Natural killer cell (primary cell): ENCODE measurements at regions of chr6 and their contacts with region 1.

Region 1: GRCh38 chr6:166402582-166403277 is 20.0 kb upstream of the MPC1 start:
- DNase-seq: no peak
- ATAC-seq: no peak
- H3K4me3 ChIP-seq: no peak overlapping the region
- H3K4me3 Mint-ChIP-seq: no peak overlapping the region
- H3K27ac ChIP-seq: no peak overlapping the region
- H3K27ac Mint-ChIP-seq: no peak overlapping the region
- H3K4me1 ChIP-seq: peaks cover 5% of the 10 kb centered on the region
- H3K4me1 Mint-ChIP-seq: peaks cover 0 to 16% of the 10 kb centered on the region in 2 donors
- H3K27me3 ChIP-seq: no peaks in the 10 kb centered on the region
- H3K27me3 Mint-ChIP-seq: peaks cover 6 to 11% of the 10 kb centered on the region in 2 donors
- CTCF ChIP-seq: no peak

Region 2: GRCh38 chr6:166313255-166314070 is 89.3 kb before region 1 on chr6:
- intact Hi-C with region 1: loop called (anchors 1 kb)
- DNase-seq: peak; percentile 45 to 77
- ATAC-seq: peak; percentile 95 to 100 (median 97)
- H3K4me3 ChIP-seq: no peak overlapping the region
- H3K4me3 Mint-ChIP-seq: no peak overlapping the region
- H3K27ac ChIP-seq: no peak overlapping the region
- H3K27ac Mint-ChIP-seq: no peak overlapping the region
- H3K4me1 ChIP-seq: peaks cover 2% of the 10 kb centered on the region
- H3K4me1 Mint-ChIP-seq: peaks cover 1 to 6% of the 10 kb centered on the region in 2 donors
- H3K27me3 ChIP-seq: peaks cover 6% of the 10 kb centered on the region
- H3K27me3 Mint-ChIP-seq: peaks cover 17% of the 10 kb centered on the region in 2 donors
- CTCF ChIP-seq: peak; percentile 66

Region 3: GRCh38 chr6:166382933-166383801 is 19.6 kb before region 1 on chr6 and contains the start of gene MPC1:
- intact Hi-C with region 1: no loop called
- DNase-seq: peak; percentile 94 to 96
- ATAC-seq: peak; percentile 92 to 99 (median 95)
- H3K4me3 ChIP-seq: peak within 1 kb of the TSS; percentile 75
- H3K4me3 Mint-ChIP-seq: peak within 1 kb of the TSS; percentile 94
- H3K27ac ChIP-seq: peak within 1 kb of the TSS; percentile 75
- H3K27ac Mint-ChIP-seq: peak within 1 kb of the TSS; percentile 88 to 92
- H3K4me1 ChIP-seq: peaks cover 15% of the 10 kb centered on the region
- H3K4me1 Mint-ChIP-seq: peaks cover 9 to 13% of the 10 kb centered on the region in 2 donors
- H3K27me3 ChIP-seq: no peaks in the 10 kb centered on the region
- H3K27me3 Mint-ChIP-seq: no peaks in the 10 kb centered on the region
- CTCF ChIP-seq: no peak
- total RNA-seq, gene MPC1: 26.3 to 31.1 (median 30.4) TPM